ENCODE measurements at regions of chr4 and their contacts with region 1.

Region 1: DNA sequence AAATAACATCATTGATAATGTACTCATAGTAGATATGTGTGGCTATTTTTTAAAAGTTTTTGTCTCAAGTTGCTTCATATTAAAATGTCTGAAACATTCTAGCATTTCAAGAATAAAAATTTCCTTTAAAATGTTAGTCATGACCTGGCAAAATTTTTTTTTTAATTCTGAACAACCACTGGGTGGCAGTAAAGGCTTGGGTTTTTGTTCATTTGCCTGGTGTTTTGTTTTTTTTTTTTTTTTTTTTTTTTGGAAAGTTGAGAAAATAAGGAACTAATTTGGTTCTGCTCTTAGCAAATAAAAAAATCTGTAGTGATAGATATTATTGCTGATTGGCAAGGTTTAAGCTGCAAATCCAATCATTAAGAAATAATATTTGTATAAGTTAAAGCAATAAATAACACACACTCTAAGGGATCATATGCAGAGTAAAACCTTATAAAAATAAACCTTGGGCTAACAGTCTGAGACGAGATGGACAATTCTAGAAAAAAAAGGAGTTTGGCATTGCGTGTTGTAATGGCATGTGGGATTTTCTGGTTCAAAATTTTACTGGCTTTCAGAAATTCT is 81.4 kb downstream of the CEP44 start:
- DNase-seq: no peak
- H3K4me3 ChIP-seq: no peak overlapping the region
- H3K27ac ChIP-seq: no peak overlapping the region
- H3K4me1 ChIP-seq: no peaks in the 10 kb centered on the region
- H3K27me3 ChIP-seq: no peaks in the 10 kb centered on the region
- CTCF ChIP-seq: peak; percentile 18 to 38 (median 32)
- POLR2A ChIP-seq: no peak

Region 2: GRCh38 chr4:174036576-174036975 is 328.5 kb before region 1 on chr4:
- intact Hi-C with region 1: no loop called
- DNase-seq: no peak
- H3K4me3 ChIP-seq: no peak overlapping the region
- H3K27ac ChIP-seq: no peak overlapping the region
- H3K4me1 ChIP-seq: no peaks in the 10 kb centered on the region
- H3K27me3 ChIP-seq: no peaks in the 10 kb centered on the region
- CTCF ChIP-seq: no peak
- POLR2A ChIP-seq: no peak

Region 3: GRCh38 chr4:174423257-174423944 is 58.3 kb after region 1 on chr4:
- intact Hi-C with region 1: no loop called
- DNase-seq: no peak
- H3K4me3 ChIP-seq: no peak overlapping the region
- H3K27ac ChIP-seq: no peak overlapping the region
- H3K4me1 ChIP-seq: peaks cover 8% of the 10 kb centered on the region
- H3K27me3 ChIP-seq: no peaks in the 10 kb centered on the region
- CTCF ChIP-seq: no peak
- POLR2A ChIP-seq: no peak

Region 4: GRCh38 chr4:174631901-174632758 is 267.0 kb after region 1 on chr4:
- intact Hi-C with region 1: loop called (anchors 5 kb)
- DNase-seq: no peak
- H3K4me3 ChIP-seq: no peak overlapping the region
- H3K27ac ChIP-seq: no peak overlapping the region
- H3K4me1 ChIP-seq: no peaks in the 10 kb centered on the region
- H3K27me3 ChIP-seq: no peaks in the 10 kb centered on the region
- CTCF ChIP-seq: peak; percentile 38 to 71 (median 55)
- POLR2A ChIP-seq: no peak